PC-3 (cell line): ENCODE measurements at regions of chr13 and their contacts with region 1.

Region 1: GRCh38 chr13:46403851-46404732 is 17.0 kb upstream of the RUBCNL start:
- DNase-seq: no peak
- ATAC-seq: no peak
- H3K4me3 ChIP-seq: no peak overlapping the region
- H3K27ac ChIP-seq: no peak overlapping the region
- H3K4me1 ChIP-seq: no peaks in the 10 kb centered on the region
- H3K27me3 ChIP-seq: no peaks in the 10 kb centered on the region
- CTCF ChIP-seq: no peak

Region 2: GRCh38 chr13:46134961-46135522 is 269.1 kb before region 1 on chr13:
- CTCF ChIA-PET with region 1: no interaction called
- POLR2A ChIA-PET with region 1: interaction called, 17 read pairs
- intact Hi-C with region 1: no loop called
- DNase-seq: peak; percentile 92
- ATAC-seq: peak; percentile 96
- H3K4me3 ChIP-seq: peak overlapping the region; percentile 28; the same call in 1 of the 2 replicates
- H3K27ac ChIP-seq: peak overlapping the region; percentile 68
- H3K4me1 ChIP-seq: peaks cover 19% of the 10 kb centered on the region
- H3K27me3 ChIP-seq: no peaks in the 10 kb centered on the region
- CTCF ChIP-seq: no peak